MCF 10A (cell line): ENCODE measurements at regions of chr10 and their contacts with region 1.

Region 1: DNA sequence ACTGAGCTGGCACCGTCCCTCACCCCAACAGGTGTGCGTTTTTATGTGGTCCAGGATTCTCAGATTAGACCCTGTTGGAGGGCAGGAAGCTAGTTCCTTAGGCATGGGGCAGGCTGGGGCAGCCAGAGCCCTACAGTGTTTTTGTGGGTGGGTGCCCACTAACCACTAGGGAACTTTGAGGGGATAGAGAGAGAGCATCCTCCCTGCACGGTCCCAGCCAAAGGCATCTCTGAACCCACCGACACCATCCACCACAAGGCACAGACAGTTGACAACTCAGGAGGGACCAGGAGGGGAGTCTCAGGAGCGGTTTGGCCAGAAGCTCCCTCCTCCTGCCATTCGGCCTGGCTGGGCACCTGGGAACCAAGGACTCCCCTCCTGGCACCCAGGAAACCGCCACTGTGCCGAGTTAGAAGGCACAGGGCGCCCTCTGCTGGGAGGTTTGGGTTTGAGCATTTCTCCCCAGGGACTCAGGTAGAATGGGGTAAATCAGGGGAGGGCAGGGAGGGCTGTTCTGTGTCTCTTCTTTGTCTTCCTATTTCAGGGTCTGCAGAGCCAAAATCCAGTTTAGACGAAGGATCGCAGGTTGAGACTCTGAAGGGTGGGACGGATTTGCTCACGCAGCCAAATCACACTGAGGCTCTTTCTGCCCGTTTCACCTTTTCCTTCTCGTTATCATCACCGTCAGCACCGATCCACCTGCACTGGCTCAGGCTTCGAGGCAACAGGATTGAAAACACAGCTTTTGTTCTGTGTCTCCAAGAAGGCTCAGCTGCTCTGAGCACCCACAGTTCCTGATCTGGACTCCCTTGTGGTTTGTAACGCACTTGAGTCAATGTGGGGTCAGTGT is 84.8 kb upstream of the COL13A1 start:
- DNase-seq: peak; percentile 76
- H3K4me3 Mint-ChIP-seq: no peak overlapping the region
- H3K27ac Mint-ChIP-seq: no peak overlapping the region
- H3K4me1 Mint-ChIP-seq: peaks cover 17% of the 10 kb centered on the region
- H3K27me3 Mint-ChIP-seq: no peaks in the 10 kb centered on the region
- CTCF ChIP-seq: peak; percentile 88

Region 2: GRCh38 chr10:69290993-69291392 is 425.9 kb before region 1 on chr10:
- CTCF ChIA-PET with region 1: no interaction called
- POLR2A ChIA-PET with region 1: no interaction called
- intact Hi-C with region 1: no loop called
- DNase-seq: no peak
- H3K4me3 Mint-ChIP-seq: no peak overlapping the region
- H3K27ac Mint-ChIP-seq: no peak overlapping the region
- H3K4me1 Mint-ChIP-seq: no peaks in the 10 kb centered on the region
- H3K27me3 Mint-ChIP-seq: no peaks in the 10 kb centered on the region
- CTCF ChIP-seq: no peak

Region 3: GRCh38 chr10:69644658-69645295 is 72.2 kb before region 1 on chr10:
- CTCF ChIA-PET with region 1: interaction called, 104 read pairs
- POLR2A ChIA-PET with region 1: no interaction called
- intact Hi-C with region 1: loop called (anchors 1 kb)
- DNase-seq: peak; percentile 73
- H3K4me3 Mint-ChIP-seq: no peak overlapping the region
- H3K27ac Mint-ChIP-seq: no peak overlapping the region
- H3K4me1 Mint-ChIP-seq: peaks cover 15% of the 10 kb centered on the region
- H3K27me3 Mint-ChIP-seq: no peaks in the 10 kb centered on the region
- CTCF ChIP-seq: peak; percentile 88

Region 4: DNA sequence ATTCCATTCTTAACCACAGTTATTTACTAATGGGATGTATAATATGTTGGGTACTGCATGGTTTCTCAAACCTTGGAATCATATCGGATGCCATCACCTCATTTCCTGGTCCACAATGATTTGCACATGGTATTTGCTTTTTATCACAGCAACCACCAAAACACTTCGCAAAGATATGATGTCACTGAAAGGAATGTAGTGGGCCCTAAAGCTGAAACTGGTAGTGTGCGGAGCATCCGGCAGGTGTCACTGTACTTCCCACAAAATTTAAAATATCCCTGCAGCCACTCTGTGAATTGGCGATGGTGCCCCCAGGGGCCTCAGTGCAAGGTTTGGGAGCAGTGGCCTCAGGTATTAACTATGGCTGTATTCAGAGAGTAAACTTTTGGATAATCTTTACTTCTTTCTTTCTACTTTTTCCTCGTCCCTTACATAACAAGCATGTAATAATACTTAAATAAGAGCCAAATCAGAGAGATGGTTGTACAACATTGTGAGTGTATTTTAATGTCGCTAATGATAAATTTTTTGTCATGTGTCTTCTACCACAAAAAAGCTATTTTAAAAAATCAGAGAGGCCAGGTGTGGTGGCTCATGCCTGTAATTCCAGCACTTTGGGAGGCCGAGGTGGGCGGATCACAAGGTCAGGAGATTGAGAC is 20.7 kb before region 1 on chr10:
- CTCF ChIA-PET with region 1: interaction called, 53 read pairs
- POLR2A ChIA-PET with region 1: no interaction called
- intact Hi-C with region 1: loop called (anchors 1 kb)
- DNase-seq: peak; percentile 70
- H3K4me3 Mint-ChIP-seq: no peak overlapping the region
- H3K27ac Mint-ChIP-seq: no peak overlapping the region
- H3K4me1 Mint-ChIP-seq: no peaks in the 10 kb centered on the region
- H3K27me3 Mint-ChIP-seq: peaks cover 24% of the 10 kb centered on the region
- CTCF ChIP-seq: peak; percentile 69

Region 5: DNA sequence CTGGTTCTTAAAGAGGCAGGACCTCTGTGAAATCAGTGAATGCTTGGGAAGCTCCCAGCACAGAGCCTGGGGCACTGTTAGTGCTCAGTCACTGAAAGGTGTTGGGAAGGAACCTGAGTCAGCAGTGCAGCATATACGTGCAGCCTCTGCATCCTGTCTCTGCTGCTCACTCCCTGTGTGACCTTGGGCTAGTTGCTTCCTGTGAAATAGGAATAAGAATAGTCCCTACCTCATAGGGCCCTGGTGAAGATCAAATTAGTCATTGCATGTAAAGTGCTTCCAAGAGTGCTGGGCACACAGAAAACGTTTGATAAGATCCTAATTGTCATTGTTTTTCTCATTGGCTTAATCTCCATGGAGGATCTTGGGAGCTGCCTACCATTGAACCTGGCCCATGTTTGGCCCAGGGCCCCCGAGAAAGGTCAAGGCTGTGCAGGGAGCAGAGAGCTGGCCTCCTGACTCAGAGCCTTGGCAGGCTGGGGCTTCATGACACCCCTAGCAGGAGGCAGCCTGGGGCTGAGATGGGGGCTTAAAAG is 11.5 kb after region 1 on chr10:
- CTCF ChIA-PET with region 1: interaction called, 38 read pairs
- POLR2A ChIA-PET with region 1: interaction called, 3 read pairs
- intact Hi-C with region 1: no loop called
- DNase-seq: peak; percentile 90
- H3K4me3 Mint-ChIP-seq: no peak overlapping the region
- H3K27ac Mint-ChIP-seq: peak overlapping the region; percentile 80
- H3K4me1 Mint-ChIP-seq: peaks cover 12% of the 10 kb centered on the region
- H3K27me3 Mint-ChIP-seq: no peaks in the 10 kb centered on the region
- CTCF ChIP-seq: no peak